Activated B cell treated with CpG ODN at 0.5 μM for 24 hours (primary cell): ENCODE measurements at regions of chr7 and their contacts with region 1.

Region 1: DNA sequence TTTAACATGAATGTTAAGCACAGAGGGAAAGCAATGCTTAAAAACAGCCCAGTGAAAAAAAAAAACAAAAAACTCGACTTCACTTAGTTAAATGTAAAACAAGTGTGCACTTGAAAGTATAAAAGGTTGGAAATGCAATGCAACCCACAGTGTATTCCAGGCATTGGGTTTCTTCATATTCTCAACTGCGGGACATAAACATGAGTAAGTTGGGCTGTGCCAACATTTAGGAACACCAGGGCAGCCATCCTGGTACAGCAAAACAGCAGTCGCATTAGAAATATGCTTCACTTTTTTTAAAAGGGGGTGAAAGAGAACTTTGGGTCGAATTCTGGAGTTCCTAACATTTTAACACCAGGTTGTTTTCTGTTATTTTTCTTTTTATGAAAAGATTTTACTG is 937 bp downstream of the STEAP1 start:
- DNase-seq: no peak
- ATAC-seq: no peak
- H3K4me3 Mint-ChIP-seq: no peak overlapping the region
- H3K27ac Mint-ChIP-seq: no peak overlapping the region
- H3K4me1 Mint-ChIP-seq: peaks cover 3% of the 10 kb centered on the region
- H3K27me3 Mint-ChIP-seq: peaks cover 20% of the 10 kb centered on the region
- CTCF ChIP-seq: no peak

Region 2: DNA sequence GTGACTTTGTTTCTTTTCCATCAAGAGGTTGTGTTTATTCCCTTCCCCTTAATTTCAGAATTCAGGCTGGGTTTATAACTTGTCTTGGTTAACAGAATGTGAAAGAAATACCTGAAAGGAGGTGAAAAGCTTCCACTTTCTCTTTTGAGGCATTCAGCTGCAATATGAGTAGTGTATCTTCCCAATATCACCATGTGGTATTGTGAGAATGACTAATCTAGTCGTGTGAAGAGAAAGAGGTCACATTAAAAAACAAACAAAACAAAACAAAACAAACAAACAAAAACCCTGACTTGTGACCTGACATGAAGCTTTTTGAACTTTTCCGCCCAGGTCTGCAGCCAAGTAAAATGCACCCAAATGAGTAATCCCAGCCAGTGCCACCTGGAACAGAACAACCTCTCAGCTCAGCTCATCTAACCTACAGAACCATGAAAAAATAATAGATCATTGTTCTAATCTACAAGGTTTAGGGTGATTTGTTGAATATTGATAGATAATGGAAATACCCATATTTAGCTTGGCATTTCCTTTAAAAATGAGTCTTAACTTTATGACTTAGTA is 1288.8 kb before region 1 on chr7:
- CTCF ChIA-PET with region 1: no interaction called
- POLR2A ChIA-PET with region 1: no interaction called
- intact Hi-C with region 1: no loop called
- DNase-seq: no peak
- ATAC-seq: no peak
- H3K4me3 Mint-ChIP-seq: no peak overlapping the region
- H3K27ac Mint-ChIP-seq: no peak overlapping the region
- H3K4me1 Mint-ChIP-seq: no peaks in the 10 kb centered on the region
- H3K27me3 Mint-ChIP-seq: no peaks in the 10 kb centered on the region
- CTCF ChIP-seq: no peak

Region 3: GRCh38 chr7:90211391-90212148 is 56.4 kb after region 1 on chr7 and contains the start of gene STEAP2:
- CTCF ChIA-PET with region 1: interaction called, 3 read pairs
- POLR2A ChIA-PET with region 1: no interaction called
- intact Hi-C with region 1: loop called (anchors 1 kb)
- DNase-seq: peak; percentile 15
- ATAC-seq: peak; percentile 73
- H3K4me3 Mint-ChIP-seq: peak within 1 kb of the TSS; percentile 50
- H3K27ac Mint-ChIP-seq: no peak within 1 kb of the TSS
- H3K4me1 Mint-ChIP-seq: peaks cover 7% of the 10 kb centered on the region
- H3K27me3 Mint-ChIP-seq: peaks cover 15% of the 10 kb centered on the region
- CTCF ChIP-seq: no peak
- total RNA-seq, gene STEAP2: not detected in 2 replicates

Region 4: DNA sequence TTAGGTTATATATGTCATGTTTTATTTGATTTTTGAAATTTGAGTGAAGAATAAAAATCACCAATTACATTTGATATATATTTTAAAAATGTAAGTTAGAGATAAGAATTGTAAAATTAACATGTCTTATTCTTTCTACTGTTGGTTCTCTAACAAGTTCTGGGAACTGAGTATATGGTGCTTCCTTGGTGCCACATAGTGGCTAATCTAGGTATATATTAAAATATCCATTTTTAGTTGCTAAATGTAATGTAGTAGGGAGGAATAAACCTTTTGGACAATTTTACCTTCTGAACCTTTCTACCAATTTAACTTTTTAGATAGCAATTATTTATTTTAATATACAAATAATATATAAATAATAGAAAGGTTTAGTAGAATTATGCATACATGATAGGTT is 107.2 kb after region 1 on chr7:
- CTCF ChIA-PET with region 1: interaction called, 9 read pairs
- POLR2A ChIA-PET with region 1: no interaction called
- intact Hi-C with region 1: loop called (anchors 1 kb)
- DNase-seq: no peak
- ATAC-seq: peak; percentile 62
- H3K4me3 Mint-ChIP-seq: no peak overlapping the region
- H3K27ac Mint-ChIP-seq: no peak overlapping the region
- H3K4me1 Mint-ChIP-seq: no peaks in the 10 kb centered on the region
- H3K27me3 Mint-ChIP-seq: no peaks in the 10 kb centered on the region
- CTCF ChIP-seq: no peak

Region 5: DNA sequence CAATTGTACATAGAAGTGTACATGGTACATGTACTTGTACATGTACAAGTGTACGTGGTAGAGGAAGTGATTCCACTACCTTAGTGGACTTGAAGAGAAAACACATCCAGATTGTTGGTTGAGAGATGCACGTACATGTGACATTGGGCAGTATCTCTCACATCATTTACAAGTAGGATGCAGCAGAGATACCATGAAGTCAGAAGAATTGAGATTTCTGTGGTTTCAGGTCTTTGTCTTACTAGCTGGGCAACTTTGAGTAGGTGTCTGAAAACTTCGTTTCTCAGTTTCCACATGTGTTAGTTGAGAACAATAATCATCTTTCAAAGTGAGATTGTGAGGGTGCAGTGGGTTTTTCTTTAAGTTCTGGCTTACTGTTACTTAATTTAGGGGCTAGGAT is 269.5 kb after region 1 on chr7:
- CTCF ChIA-PET with region 1: interaction called, 73 read pairs
- POLR2A ChIA-PET with region 1: interaction called, 4 read pairs
- intact Hi-C with region 1: loop called (anchors 1 kb)
- DNase-seq: no peak
- ATAC-seq: no peak
- H3K4me3 Mint-ChIP-seq: no peak overlapping the region
- H3K27ac Mint-ChIP-seq: no peak overlapping the region
- H3K4me1 Mint-ChIP-seq: no peaks in the 10 kb centered on the region
- H3K27me3 Mint-ChIP-seq: no peaks in the 10 kb centered on the region
- CTCF ChIP-seq: no peak

Region 6: GRCh38 chr7:91636129-91636724 is 1481.0 kb after region 1 on chr7:
- CTCF ChIA-PET with region 1: no interaction called
- POLR2A ChIA-PET with region 1: no interaction called
- intact Hi-C with region 1: loop called (anchors 5 kb)
- DNase-seq: no peak
- ATAC-seq: no peak
- H3K4me3 Mint-ChIP-seq: no peak overlapping the region
- H3K27ac Mint-ChIP-seq: no peak overlapping the region
- H3K4me1 Mint-ChIP-seq: no peaks in the 10 kb centered on the region
- H3K27me3 Mint-ChIP-seq: no peaks in the 10 kb centered on the region
- CTCF ChIP-seq: no peak